Sigmoid colon (tissue), 7 donors: ENCODE measurements at regions of chr1 and their contacts with region 1.

Region 1: GRCh38 chr1:153572569-153573015 is 6.9 kb upstream of the S100A2 start:
- DNase-seq: peak; percentile 91
- H3K4me3 ChIP-seq: no peak overlapping the region
- H3K27ac ChIP-seq: peak overlapping the region; percentile 57 to 68 (median 62)
- H3K4me1 ChIP-seq: peaks cover 0 to 28% (median 22%) of the 10 kb centered on the region in 4 donors
- H3K27me3 ChIP-seq: no peaks in the 10 kb centered on the region
- CTCF ChIP-seq: peak; percentile 64 to 89 (median 84)
- EP300 ChIP-seq: no peak
- POLR2A ChIP-seq: no peak

Region 2: GRCh38 chr1:153532769-153533599 is 39.6 kb before region 1 on chr1:
- intact Hi-C with region 1: loop called (anchors 1 kb)
- DNase-seq: peak; percentile 96
- H3K4me3 ChIP-seq: peak overlapping the region; percentile 84 to 92 (median 91)
- H3K27ac ChIP-seq: peak overlapping the region; percentile 98 to 99 (median 99)
- H3K4me1 ChIP-seq: peaks cover 0 to 44% (median 38%) of the 10 kb centered on the region in 4 donors
- H3K27me3 ChIP-seq: no peaks in the 10 kb centered on the region
- CTCF ChIP-seq: peak; percentile 86 to 98 (median 92)
- EP300 ChIP-seq: peak in 1 of 4 donors; percentile 23
- POLR2A ChIP-seq: peak in 1 of 2 donors; percentile 42

Region 3: DNA sequence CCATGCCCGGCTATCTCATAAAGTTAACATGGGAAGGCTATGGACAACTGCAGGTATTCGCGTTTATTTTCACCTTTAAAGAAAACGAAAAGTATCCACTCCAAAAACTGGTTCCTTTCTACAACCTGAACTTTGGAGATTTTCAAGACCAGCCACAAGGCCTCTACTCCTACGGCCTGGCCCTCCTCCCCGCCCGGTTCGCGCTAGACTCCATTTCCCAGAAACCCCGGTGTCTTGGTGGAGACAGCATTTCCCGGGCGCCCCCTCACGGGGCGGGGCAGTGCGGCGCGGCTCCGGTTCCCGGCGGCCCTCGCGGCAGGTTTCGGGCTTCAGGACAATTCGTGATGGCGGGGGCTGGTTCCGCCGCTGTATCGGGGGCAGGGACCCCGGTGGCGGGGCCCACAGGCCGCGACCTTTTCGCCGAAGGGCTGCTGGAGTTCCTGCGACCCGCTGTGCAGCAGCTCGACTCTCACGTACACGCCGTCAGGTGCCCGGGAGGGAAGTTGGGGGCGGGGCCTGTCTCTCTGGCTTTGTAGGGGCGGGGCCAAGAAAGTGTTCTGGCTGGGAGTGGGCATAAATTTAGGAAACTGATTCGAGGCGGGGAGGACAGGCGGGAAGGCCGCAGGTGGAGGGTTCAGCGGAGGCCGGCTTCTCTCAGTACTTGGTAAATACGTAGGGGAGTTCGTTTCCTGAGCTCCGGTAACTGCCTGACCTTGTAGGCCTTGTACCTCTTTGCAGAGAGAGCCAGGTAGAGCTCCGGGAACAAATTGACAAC is 86.0 kb after region 1 on chr1 and contains the start of gene SNAPIN:
- intact Hi-C with region 1: loop called (anchors 5 kb)
- DNase-seq: peak; percentile 96
- H3K4me3 ChIP-seq: peak within 1 kb of the TSS; percentile 58 to 73 (median 67)
- H3K27ac ChIP-seq: peak within 1 kb of the TSS; percentile 92 to 94 (median 93)
- H3K4me1 ChIP-seq: peaks cover 0 to 14% (median 11%) of the 10 kb centered on the region in 4 donors
- H3K27me3 ChIP-seq: no peaks in the 10 kb centered on the region
- CTCF ChIP-seq: peak in 1 of 4 experiments; percentile 16
- EP300 ChIP-seq: peak in 1 of 4 donors; percentile 39
- POLR2A ChIP-seq: peak; percentile 51 to 53
- total RNA-seq, gene SNAPIN: 51.2 to 94.5 (median 85.7) TPM

Region 4: DNA sequence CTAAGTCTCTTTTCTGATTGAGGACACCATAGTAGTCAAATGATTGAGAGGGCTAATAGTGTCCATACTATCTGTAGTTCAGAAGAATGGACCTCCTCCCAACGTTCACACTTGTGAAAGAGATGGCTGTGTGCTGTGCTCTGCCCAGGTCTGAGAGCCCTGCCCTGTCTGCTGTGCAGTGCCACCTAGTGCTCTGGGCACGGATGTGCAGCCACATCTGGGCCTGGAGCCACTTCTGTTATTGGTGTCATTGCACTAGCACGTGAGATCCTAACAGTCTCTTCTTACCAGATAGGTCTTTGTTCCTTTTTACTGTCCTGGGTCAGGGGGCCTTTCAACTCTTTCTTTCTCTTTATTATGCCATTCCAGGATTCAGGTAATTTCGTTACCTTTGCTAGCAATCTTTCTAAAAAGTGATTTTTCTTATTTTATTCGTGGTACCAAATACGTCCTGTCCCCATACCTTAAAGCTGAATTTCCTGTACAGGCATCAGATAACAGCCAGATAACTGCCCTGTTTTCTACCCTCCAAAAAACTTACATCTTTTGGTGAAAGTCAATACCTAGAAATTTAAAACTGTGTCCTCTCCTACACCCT is 176.9 kb after region 1 on chr1:
- intact Hi-C with region 1: loop called (anchors 2 kb)
- DNase-seq: peak; percentile 95
- H3K4me3 ChIP-seq: no peak overlapping the region
- H3K27ac ChIP-seq: peak overlapping the region; percentile 45 to 68 (median 52)
- H3K4me1 ChIP-seq: peaks cover 0 to 60% (median 11%) of the 10 kb centered on the region in 4 donors
- H3K27me3 ChIP-seq: no peaks in the 10 kb centered on the region
- CTCF ChIP-seq: peak; percentile 82 to 90 (median 88)
- EP300 ChIP-seq: no peak
- POLR2A ChIP-seq: no peak

Region 5: DNA sequence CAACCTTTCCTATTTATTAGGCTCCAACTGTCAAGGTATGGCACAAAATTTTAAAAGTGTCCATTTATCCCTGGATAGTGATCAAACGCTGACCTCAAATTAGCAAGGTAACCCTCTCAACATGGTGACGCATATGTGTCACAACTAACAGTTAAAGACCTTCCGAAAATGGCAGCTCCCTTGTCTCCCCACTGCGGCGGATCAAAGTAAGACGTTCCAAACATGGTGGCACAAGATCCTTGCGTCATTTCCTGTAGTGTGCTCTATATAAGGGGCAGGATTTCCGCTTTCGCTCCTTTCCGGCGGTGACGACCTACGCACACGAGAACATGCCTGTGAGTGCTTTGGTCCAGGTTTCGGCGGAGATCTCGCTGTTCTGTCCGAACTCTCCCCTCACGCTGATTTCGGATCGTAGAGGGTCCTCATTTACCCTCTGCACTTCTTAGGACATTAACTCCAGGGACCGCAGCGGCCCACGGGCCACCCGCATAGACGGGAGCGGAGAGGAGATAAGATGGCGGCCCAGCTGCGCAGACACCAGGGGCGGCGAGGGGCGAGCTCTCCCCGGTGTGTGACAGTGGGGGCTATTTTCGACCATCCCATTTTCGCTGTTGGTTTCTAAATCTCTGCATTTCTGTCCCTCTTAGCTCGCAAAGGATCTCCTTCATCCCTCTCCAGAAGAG is 418.0 kb after region 1 on chr1 and contains the start of gene RPS27:
- intact Hi-C with region 1: no loop called
- DNase-seq: peak; percentile 98
- H3K4me3 ChIP-seq: peak within 1 kb of the TSS; percentile 72 to 96 (median 80)
- H3K27ac ChIP-seq: peak within 1 kb of the TSS; percentile 90 to 95 (median 92)
- H3K4me1 ChIP-seq: peaks cover 0 to 45% (median 40%) of the 10 kb centered on the region in 4 donors
- H3K27me3 ChIP-seq: no peaks in the 10 kb centered on the region
- CTCF ChIP-seq: no peak
- EP300 ChIP-seq: peak in 2 of 4 donors; percentile 63 to 75
- POLR2A ChIP-seq: peak; percentile 99 to 100
- total RNA-seq, gene RPS27: 1,466 to 4,347 (median 3,611) TPM